Naive thymus-derived CD4-positive, alpha-beta T cell (primary cell): ENCODE measurements at regions of chr10 and their contacts with region 1.

Region 1: DNA sequence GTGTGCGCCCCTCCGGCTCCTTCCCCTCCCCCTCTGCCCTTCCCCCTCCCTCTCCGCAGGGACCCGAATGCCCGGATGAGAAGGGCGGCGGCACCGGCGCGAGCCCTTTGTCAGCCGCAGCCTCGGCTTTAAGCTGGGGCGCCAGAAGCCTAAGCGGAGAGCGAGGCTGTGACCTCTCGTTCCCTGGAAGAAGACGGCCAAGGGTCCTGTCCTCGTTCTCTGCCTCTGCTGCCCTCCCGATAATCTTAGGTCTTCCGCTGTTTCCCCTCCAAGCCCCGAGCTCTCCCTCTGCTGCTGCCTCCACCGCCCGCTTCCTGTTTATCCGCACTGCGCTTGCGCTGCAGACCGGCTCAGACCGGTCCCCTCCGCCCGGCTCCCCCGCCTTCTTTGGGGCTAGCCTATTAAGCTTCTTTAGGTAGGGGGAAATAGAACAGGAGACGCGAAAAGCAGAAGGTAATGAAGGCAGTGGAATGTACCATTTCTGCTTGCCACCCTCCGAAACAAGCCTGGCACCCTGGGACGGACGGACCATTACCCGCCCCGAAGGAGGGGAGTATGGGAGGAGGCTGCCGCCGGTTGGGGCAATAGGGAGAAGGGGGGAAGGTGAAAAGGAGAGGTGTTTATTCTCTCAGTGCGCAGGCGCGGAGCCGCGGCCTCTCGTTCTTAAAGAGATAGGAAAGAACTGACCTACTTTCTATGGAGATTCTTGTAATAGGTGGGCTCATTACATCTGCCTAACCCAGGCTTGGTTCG is at the start of gene OGA:
- DNase-seq: peak; percentile 90 to 100 (median 99)
- ATAC-seq: peak; percentile 97
- H3K4me3 ChIP-seq: peak within 1 kb of the TSS; percentile 81
- H3K4me3 Mint-ChIP-seq: peak within 1 kb of the TSS; percentile 95 to 100 (median 97)
- H3K27ac ChIP-seq: peak within 1 kb of the TSS; percentile 82
- H3K27ac Mint-ChIP-seq: peak within 1 kb of the TSS; percentile 95 to 99 (median 98)
- H3K4me1 ChIP-seq: peaks cover 19 to 25% of the 10 kb centered on the region in 2 donors
- H3K4me1 Mint-ChIP-seq: peaks cover 34 to 57% (median 50%) of the 10 kb centered on the region in 7 donors
- H3K27me3 ChIP-seq: no peaks in the 10 kb centered on the region
- H3K27me3 Mint-ChIP-seq: peaks cover 0 to 4% (median 0%) of the 10 kb centered on the region in 5 donors
- total RNA-seq, gene OGA: 154 to 338 (median 321) TPM

Region 2: GRCh38 chr10:101693978-101694673 is 124.2 kb before region 1 on chr10:
- CTCF ChIA-PET with region 1: no interaction called
- POLR2A ChIA-PET with region 1: interaction called, 15 read pairs
- intact Hi-C with region 1: loop called in 1 of 2 experiments (anchors 10 kb)
- DNase-seq: peak; percentile 60 to 81 (median 73)
- ATAC-seq: peak; percentile 77
- H3K4me3 ChIP-seq: peak overlapping the region; percentile 57
- H3K4me3 Mint-ChIP-seq: peak overlapping the region; percentile 93 to 98 (median 96)
- H3K27ac ChIP-seq: peak overlapping the region; percentile 99
- H3K27ac Mint-ChIP-seq: peak overlapping the region; percentile 94 to 100 (median 99)
- H3K4me1 ChIP-seq: peaks cover 21 to 28% of the 10 kb centered on the region in 2 donors
- H3K4me1 Mint-ChIP-seq: peaks cover 33 to 59% (median 45%) of the 10 kb centered on the region in 7 donors
- H3K27me3 ChIP-seq: no peaks in the 10 kb centered on the region
- H3K27me3 Mint-ChIP-seq: no peaks in the 10 kb centered on the region

Region 3: GRCh38 chr10:101807158-101807557 is 11.1 kb before region 1 on chr10:
- CTCF ChIA-PET with region 1: interaction called, 3 read pairs
- POLR2A ChIA-PET with region 1: interaction called, 16 read pairs
- intact Hi-C with region 1: loop called in 1 of 2 experiments (anchors 1 kb)
- DNase-seq: no peak
- ATAC-seq: no peak
- H3K4me3 ChIP-seq: no peak overlapping the region
- H3K4me3 Mint-ChIP-seq: peak overlapping the region in 1 of 10 donors; percentile 21
- H3K27ac ChIP-seq: peak overlapping the region; percentile 22
- H3K27ac Mint-ChIP-seq: peak overlapping the region in 6 of 9 donors; percentile 2 to 80 (median 43)
- H3K4me1 ChIP-seq: peaks cover 0 to 7% of the 10 kb centered on the region in 2 donors
- H3K4me1 Mint-ChIP-seq: peaks cover 2 to 44% (median 31%) of the 10 kb centered on the region in 7 donors
- H3K27me3 ChIP-seq: no peaks in the 10 kb centered on the region
- H3K27me3 Mint-ChIP-seq: no peaks in the 10 kb centered on the region

Region 4: GRCh38 chr10:102055647-102056419 is 237.5 kb after region 1 on chr10 and contains the start of gene ARMH3:
- CTCF ChIA-PET with region 1: no interaction called
- POLR2A ChIA-PET with region 1: interaction called, 3 read pairs
- intact Hi-C with region 1: loop called (anchors 1 to 2 kb)
- DNase-seq: peak; percentile 72 to 90 (median 87)
- ATAC-seq: peak; percentile 98
- H3K4me3 ChIP-seq: peak within 1 kb of the TSS; percentile 92
- H3K4me3 Mint-ChIP-seq: peak within 1 kb of the TSS; percentile 89 to 98 (median 94)
- H3K27ac ChIP-seq: peak within 1 kb of the TSS; percentile 87
- H3K27ac Mint-ChIP-seq: peak within 1 kb of the TSS; percentile 76 to 97 (median 92)
- H3K4me1 ChIP-seq: peaks cover 18 to 20% of the 10 kb centered on the region in 2 donors
- H3K4me1 Mint-ChIP-seq: peaks cover 25 to 50% (median 42%) of the 10 kb centered on the region in 7 donors
- H3K27me3 ChIP-seq: no peaks in the 10 kb centered on the region
- H3K27me3 Mint-ChIP-seq: no peaks in the 10 kb centered on the region
- total RNA-seq, gene ARMH3: 26.7 to 34.0 (median 28.8) TPM

Region 5: DNA sequence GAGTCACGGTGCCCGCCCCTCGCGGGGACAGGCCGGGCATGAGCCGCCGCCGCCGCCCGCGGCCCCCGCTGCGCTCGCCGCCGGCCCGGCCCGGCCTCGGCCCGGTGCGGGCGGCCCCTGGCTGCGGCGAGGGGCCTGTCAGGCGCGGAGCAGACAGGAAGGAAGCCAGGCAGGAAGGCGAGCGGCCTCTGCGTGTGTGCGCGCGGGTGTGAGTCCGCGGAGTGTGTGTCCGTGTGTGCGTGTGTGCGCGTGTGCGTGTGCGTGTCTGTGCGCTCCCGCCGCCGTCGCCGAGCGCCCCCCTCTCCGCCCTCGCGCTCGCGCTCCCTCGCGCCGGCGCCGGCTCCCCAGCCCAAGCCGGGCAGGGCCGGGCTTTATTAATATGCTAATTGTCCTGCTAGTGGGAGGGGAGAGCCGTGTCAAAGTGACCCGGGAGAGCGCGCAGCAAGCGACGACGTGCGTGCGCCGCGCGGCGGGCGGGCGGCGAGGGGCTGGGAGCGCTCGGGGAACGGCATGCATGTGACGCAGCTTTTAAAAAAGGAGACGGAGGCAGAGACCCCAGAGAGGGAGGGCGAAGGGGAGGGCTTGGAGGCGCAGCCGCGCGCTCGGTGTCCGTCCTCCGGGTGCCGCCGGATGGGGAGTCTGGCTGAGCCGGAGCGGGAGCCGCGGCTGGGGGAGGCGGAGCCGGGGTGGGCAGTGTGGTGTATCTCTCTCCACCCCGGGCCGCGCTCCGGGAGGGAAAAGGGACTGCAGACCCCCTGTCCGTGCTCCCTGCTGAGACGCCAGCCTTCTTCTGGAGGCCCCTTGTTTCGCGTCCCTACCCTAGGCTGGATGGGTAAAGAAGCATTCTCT is 302.1 kb after region 1 on chr10 and contains the start of gene LDB1:
- CTCF ChIA-PET with region 1: no interaction called
- POLR2A ChIA-PET with region 1: interaction called, 9 read pairs
- intact Hi-C with region 1: loop called (anchors 1 to 5 kb)
- DNase-seq: peak; percentile 51 to 74 (median 67)
- ATAC-seq: peak; percentile 70
- H3K4me3 ChIP-seq: peak within 1 kb of the TSS; percentile 90
- H3K4me3 Mint-ChIP-seq: peak within 1 kb of the TSS; percentile 88 to 98 (median 94)
- H3K27ac ChIP-seq: peak within 1 kb of the TSS; percentile 97
- H3K27ac Mint-ChIP-seq: peak within 1 kb of the TSS; percentile 80 to 98 (median 94)
- H3K4me1 ChIP-seq: peaks cover 40 to 43% of the 10 kb centered on the region in 2 donors
- H3K4me1 Mint-ChIP-seq: peaks cover 36 to 65% (median 57%) of the 10 kb centered on the region in 7 donors
- H3K27me3 ChIP-seq: no peaks in the 10 kb centered on the region
- H3K27me3 Mint-ChIP-seq: no peaks in the 10 kb centered on the region
- total RNA-seq, gene LDB1: 101 to 152 (median 115) TPM

Region 6: GRCh38 chr10:102743588-102744373 is 925.5 kb after region 1 on chr10 and contains the start of gene WBP1L:
- CTCF ChIA-PET with region 1: no interaction called
- POLR2A ChIA-PET with region 1: no interaction called
- intact Hi-C with region 1: loop called in 1 of 2 experiments (anchors 5 kb)
- DNase-seq: peak; percentile 77 to 98 (median 96)
- ATAC-seq: peak; percentile 98
- H3K4me3 ChIP-seq: peak within 1 kb of the TSS; percentile 85
- H3K4me3 Mint-ChIP-seq: peak within 1 kb of the TSS; percentile 80 to 97 (median 93)
- H3K27ac ChIP-seq: peak within 1 kb of the TSS; percentile 77
- H3K27ac Mint-ChIP-seq: peak within 1 kb of the TSS; percentile 57 to 96 (median 90)
- H3K4me1 ChIP-seq: peaks cover 17 to 25% of the 10 kb centered on the region in 2 donors
- H3K4me1 Mint-ChIP-seq: peaks cover 33 to 59% (median 48%) of the 10 kb centered on the region in 7 donors
- H3K27me3 ChIP-seq: no peaks in the 10 kb centered on the region
- H3K27me3 Mint-ChIP-seq: no peaks in the 10 kb centered on the region
- total RNA-seq, gene WBP1L: 20.5 to 37.9 (median 34.1) TPM